Sciatic nerve (tissue), 2 donors: ENCODE measurements at regions of chr9 and their contacts with region 1.

Region 1: GRCh38 chr9:87803622-87804345 is 77.9 kb downstream of the CTSL start:
- DNase-seq: no peak
- ATAC-seq: no peak

Region 2: DNA sequence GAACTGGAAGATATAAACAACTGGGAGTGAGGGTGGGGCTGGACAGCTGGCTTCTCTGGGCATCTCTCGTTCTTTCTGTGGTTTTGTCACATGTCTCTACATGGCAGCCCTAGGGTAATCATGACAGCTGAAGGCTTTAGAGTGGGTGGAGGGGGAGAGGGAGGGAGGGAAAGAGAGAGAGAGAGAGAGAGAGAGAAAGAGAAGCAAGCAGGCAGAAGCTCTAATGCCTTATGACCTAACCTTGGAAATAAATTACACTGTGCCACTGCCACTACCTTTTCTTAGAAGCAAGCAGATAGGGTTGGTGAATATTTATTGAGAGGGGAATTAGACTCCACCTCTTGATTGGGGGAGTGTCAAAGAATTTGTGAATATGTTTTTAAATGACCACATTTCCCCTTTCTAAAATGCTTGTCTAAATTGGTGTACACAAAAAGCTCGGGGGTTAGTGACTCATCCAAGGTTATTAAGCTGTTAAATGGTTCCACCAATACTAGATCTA is 308.8 kb before region 1 on chr9:
- intact Hi-C with region 1: no loop called
- DNase-seq: no peak
- ATAC-seq: peak; percentile 44

Region 3: GRCh38 chr9:87684627-87685219 is 119.1 kb before region 1 on chr9:
- intact Hi-C with region 1: loop called (anchors 10 kb)
- DNase-seq: no peak
- ATAC-seq: peak; percentile 25

Region 4: DNA sequence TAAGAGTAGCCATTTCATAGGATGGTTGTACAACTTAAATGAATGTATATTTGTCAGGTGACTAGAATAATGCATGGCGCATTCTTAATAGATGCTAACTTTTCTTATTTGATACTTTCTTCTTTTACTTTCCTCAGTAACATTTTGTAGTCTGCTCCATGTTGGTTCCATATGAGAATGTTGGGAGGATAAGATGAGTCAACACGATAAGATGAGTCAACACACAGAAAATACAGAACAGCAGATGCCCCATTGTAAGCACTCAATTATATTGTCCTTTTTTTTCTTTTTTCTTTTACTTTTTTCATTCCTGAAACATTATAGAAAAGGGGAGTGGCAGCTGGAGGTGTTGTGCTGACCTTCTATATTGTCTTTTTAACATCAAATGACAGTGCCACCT is 426.8 kb after region 1 on chr9:
- intact Hi-C with region 1: no loop called
- DNase-seq: no peak
- ATAC-seq: no peak